GM10248 (cell line): ENCODE measurements at regions of chrX and their contacts with region 1.

Region 1: GRCh38 chrX:17242470-17242869 is 132.5 kb upstream of the NHS start:
- DNase-seq: peak; percentile 33
- CTCF ChIP-seq: peak; percentile 53

Region 2: GRCh38 chrX:17689971-17690409 is 447.5 kb after region 1 on chrX:
- CTCF ChIA-PET with region 1: interaction called, 15 read pairs
- POLR2A ChIA-PET with region 1: no interaction called
- DNase-seq: peak; percentile 26
- CTCF ChIP-seq: peak; percentile 32